Psoas muscle (tissue), 8 donors: ENCODE measurements at regions of chr14 and their contacts with region 1.

Region 1: DNA sequence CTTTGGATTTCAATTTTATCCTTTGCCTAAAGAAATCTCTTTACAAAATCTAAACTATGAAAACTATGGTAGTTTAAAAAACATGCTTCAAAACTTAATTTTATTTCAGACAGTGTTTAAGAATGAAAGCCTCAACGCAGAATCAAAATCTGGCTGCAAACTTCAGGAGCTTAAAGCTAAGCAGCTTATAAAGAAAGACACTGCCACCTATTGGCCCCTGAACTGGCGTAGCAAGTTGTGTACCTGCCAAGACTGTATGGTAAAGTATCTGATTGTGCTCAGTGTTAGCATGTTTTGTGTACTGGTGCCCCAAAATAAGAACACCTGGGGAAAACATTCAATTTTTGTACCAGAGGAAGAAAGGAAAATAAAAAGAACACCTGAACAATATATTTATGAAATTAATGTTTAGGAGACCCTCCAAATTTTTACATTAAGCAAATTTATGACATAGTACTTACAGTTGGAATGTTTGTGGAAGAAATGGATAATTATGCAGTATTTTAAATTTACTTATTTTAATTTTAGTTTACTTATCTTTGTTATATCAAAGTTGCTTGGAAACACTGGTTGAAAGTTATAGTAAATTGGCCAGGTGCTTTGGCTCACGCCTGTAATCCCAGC is 12.2 kb downstream of the UBR7 start:
- DNase-seq: no peak
- ATAC-seq: peak in 2 of 4 donors; percentile 79 to 85
- H3K4me3 ChIP-seq: no peak overlapping the region
- H3K27ac ChIP-seq: no peak overlapping the region
- H3K4me1 ChIP-seq: no peaks in the 10 kb centered on the region
- H3K27me3 ChIP-seq: no peaks in the 10 kb centered on the region
- CTCF ChIP-seq: peak; percentile 46

Region 2: DNA sequence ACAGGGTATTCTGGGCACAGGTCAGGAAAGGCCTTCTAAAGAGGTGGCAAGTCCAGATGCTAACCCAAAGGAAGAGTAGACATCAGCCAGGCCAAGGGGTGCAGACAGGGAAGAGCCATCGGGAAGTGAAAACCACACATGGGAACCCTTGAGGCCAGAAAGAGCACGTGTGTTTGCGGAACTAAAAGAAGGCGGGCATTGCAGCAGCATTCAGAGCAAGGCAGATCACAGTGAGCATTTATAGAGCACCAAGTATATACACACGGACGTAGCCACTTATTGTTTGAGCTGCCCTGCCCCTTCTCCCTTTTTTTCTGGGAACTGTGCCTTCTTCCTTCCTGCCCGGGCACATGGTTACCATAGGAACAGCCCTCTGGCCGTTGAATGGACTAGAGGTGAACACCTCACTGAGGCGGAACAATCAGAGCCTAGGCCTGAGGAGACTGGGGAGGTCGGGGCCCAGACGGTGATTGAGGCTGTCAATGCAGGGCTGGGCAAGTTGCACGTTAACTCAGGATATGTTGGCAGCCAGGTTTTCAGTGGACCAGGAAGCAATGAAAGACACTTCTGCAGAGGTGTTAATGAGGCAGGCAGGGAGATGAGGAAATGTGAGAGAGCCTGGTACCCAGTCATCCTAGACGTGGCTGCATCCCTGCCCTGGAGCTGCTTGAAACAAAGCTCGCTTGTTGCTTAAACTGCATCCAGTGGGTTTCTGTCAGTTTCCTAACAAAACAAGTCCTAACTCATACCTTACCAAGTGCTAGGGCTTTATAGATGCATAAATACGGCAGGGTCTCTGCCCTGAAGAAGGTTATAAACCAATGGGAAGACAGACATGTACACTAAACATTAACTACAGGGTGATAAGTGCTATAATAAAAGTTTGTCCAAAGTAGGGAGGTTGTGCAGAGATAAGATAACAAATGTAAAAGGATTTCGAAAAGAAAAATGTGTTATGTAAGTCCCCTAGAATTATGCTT is 68.7 kb before region 1 on chr14:
- intact Hi-C with region 1: no loop called
- DNase-seq: peak in 1 of 2 donors; percentile 14
- ATAC-seq: no peak
- H3K4me3 ChIP-seq: no peak overlapping the region
- H3K27ac ChIP-seq: no peak overlapping the region
- H3K4me1 ChIP-seq: no peaks in the 10 kb centered on the region
- H3K27me3 ChIP-seq: no peaks in the 10 kb centered on the region
- CTCF ChIP-seq: no peak

Region 3: DNA sequence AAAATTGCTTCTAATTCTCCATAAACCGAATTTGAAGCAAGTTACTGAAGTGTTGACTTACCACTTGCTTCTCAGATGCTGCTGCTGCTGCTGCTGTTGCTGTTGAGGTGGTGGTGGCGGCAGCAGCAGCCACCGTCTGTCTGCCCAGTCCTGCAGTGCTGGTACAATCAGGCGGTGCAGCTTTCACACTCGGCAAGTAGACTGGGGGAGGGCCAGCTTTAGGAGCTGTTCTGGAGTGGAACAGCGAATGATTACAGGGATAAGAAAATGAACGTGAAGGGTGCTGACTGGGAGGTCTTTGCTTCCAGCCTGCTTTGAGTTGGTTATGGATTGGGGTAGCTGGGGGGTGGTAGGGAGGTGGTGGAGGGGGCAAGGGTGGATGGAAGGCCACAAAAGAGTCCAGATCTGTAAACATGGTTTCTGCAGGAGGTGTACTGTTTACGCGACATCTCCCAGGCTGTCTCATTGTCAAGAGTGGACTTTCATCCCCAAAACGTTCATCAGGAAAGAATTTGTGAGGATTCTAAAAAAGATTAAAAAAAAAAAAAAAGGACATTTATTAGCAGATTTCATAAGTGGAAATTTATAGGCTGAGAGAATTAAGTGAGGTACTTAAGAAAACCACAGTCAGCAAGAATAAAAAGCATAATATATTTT is 26.7 kb after region 1 on chr14:
- intact Hi-C with region 1: loop called in 1 of 2 experiments (anchors 5 kb)
- DNase-seq: no peak
- ATAC-seq: no peak
- H3K4me3 ChIP-seq: no peak overlapping the region
- H3K27ac ChIP-seq: no peak overlapping the region
- H3K4me1 ChIP-seq: no peaks in the 10 kb centered on the region
- H3K27me3 ChIP-seq: no peaks in the 10 kb centered on the region
- CTCF ChIP-seq: no peak